ENCODE measurements at regions of chr20 and their contacts with region 1.

Region 1: DNA sequence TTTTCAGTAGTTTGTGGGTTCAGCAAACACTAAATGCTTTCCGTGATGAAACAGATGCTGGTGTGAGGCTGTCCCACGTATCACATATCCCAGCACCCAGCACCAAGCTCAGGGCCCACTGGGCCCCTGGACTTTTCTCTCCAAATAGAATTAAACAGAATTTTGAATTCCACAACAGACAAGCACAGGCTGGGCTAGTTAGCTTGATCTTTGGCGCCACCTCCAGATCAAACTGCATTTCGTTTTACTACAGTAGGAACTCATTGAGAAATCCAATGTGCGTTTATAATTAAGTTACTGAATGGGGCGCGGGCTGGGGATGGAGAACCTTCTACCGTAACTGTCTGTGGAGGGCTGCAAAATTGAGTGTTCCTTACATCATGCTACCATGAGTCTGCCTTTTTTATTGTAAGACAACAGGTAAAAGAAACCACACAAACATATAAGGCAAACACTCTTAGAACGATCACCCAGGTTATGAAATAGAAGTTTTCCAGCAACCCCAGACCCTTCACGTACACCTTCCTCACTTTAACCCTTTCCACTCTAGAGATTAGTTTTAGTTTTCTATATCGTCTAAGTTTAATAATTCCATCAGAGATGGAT is 107.8 kb downstream of the ZFP64 start:
- DNase-seq: no peak
- H3K4me3 ChIP-seq: no peak overlapping the region
- H3K27ac ChIP-seq: no peak overlapping the region
- H3K4me1 ChIP-seq: peaks cover 0 to 6% (median 0%) of the 10 kb centered on the region in 3 donors
- H3K27me3 ChIP-seq: no peaks in the 10 kb centered on the region
- CTCF ChIP-seq: peak in 5 of 6 experiments; percentile 39 to 65 (median 40)
- POLR2A ChIP-seq: no peak

Region 2: DNA sequence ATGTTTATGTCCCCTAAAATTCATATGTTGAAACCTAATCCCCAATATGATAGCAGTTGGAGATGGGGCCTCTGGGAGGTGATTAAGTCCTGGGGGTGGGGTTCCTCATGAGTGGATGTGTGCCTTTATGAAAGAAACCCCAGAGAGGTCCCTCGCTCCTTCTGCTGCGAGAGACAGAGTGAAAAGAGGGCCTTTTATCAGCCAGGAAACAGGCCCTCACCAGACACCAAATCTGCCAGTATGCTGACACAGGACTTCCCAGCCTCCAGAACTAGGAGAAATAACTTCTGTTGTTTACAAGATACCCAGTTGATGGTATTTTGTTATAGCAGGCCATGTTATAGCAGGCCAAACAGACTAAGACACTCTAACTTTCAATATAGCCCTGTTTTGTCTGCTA is 440.3 kb before region 1 on chr20:
- intact Hi-C with region 1: loop called (anchors 10 kb)
- DNase-seq: no peak
- H3K4me3 ChIP-seq: no peak overlapping the region
- H3K27ac ChIP-seq: no peak overlapping the region
- H3K4me1 ChIP-seq: peaks cover 0 to 6% (median 0%) of the 10 kb centered on the region in 3 donors
- H3K27me3 ChIP-seq: no peaks in the 10 kb centered on the region
- CTCF ChIP-seq: no peak
- POLR2A ChIP-seq: no peak

Region 3: DNA sequence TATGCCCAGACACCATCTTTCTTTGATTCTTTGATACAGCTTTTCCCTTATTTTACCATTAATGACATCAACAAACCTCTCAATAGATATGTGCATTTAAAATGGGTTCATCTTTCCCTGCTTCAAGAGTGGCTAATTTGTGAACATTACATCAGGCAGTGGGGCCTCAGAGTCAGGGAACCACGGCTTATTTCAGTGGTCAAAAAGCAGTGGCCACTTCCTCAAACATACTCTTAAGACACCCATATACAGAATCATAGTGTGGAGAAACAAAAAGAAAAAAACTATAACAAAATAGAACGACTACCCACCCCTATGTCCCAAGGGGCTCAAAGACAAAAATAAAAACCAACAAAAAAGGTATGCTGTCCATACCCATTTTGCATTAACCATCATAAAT is 294.3 kb before region 1 on chr20:
- intact Hi-C with region 1: no loop called
- DNase-seq: no peak
- H3K4me3 ChIP-seq: no peak overlapping the region
- H3K27ac ChIP-seq: no peak overlapping the region
- H3K4me1 ChIP-seq: no peaks in the 10 kb centered on the region
- H3K27me3 ChIP-seq: peaks cover 0 to 7% (median 0%) of the 10 kb centered on the region in 4 donors
- CTCF ChIP-seq: no peak
- POLR2A ChIP-seq: no peak

Region 4: DNA sequence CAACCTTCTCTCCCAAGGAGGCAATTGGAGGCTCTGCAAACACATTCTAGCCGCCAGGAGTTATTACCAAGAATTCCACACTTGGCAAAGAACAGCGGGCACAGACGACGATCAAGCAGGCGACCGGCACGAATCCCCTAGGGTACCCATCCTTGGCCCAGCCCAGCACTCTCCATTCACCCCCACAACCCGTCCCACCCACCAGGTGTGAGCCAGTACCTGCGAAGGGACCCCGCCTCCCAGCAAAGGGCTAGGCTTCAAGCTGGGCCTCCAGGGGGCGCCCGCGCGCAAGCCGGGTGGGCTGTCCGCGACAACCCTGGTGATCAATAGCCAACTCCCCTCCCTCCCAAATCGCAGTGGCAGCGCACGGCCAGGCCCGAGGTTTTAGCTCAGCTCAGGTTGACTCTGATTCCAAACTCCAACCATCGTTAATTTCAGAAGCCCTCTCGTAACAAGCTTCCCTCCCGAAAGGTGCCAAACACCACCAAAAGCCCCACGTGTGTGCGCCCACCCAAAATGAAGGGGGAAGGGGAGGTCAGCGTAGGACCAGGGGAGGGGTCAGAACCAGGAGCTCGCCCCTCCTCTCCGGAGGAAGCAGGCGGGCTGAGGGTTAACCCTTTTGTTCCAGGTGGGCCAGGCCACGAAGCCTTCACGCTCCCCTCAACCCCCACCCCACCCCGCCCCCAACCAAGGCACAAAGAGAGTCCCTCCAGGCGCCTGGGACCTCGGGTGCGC is 283.5 kb before region 1 on chr20:
- intact Hi-C with region 1: loop called (anchors 10 kb)
- DNase-seq: no peak
- H3K4me3 ChIP-seq: peak overlapping the region; percentile 25 to 66 (median 45)
- H3K27ac ChIP-seq: no peak overlapping the region
- H3K4me1 ChIP-seq: peaks cover 11 to 28% (median 17%) of the 10 kb centered on the region in 3 donors
- H3K27me3 ChIP-seq: peaks cover 0 to 67% (median 6%) of the 10 kb centered on the region in 4 donors
- CTCF ChIP-seq: peak; percentile 16 to 86 (median 66)
- POLR2A ChIP-seq: no peak

Region 5: GRCh38 chr20:51955756-51956155 is 128.0 kb before region 1 on chr20:
- intact Hi-C with region 1: no loop called
- DNase-seq: no peak
- H3K4me3 ChIP-seq: no peak overlapping the region
- H3K27ac ChIP-seq: no peak overlapping the region
- H3K4me1 ChIP-seq: no peaks in the 10 kb centered on the region
- H3K27me3 ChIP-seq: no peaks in the 10 kb centered on the region
- CTCF ChIP-seq: no peak
- POLR2A ChIP-seq: no peak